Activated B cell treated with CpG ODN at 0.5 μM for 24 hours (primary cell): ENCODE measurements at regions of chr1 and their contacts with region 1.

Region 1: GRCh38 chr1:213015099-213016050 is at the start of gene ANGEL2:
- DNase-seq: peak; percentile 87
- ATAC-seq: peak; percentile 95
- H3K4me3 Mint-ChIP-seq: peak within 1 kb of the TSS; percentile 100
- H3K27ac Mint-ChIP-seq: peak within 1 kb of the TSS; percentile 99
- H3K4me1 Mint-ChIP-seq: peaks cover 20% of the 10 kb centered on the region
- H3K27me3 Mint-ChIP-seq: no peaks in the 10 kb centered on the region
- CTCF ChIP-seq: no peak
- total RNA-seq, gene ANGEL2: 54.1 and 63.3 TPM in 2 replicates

Region 2: GRCh38 chr1:212638492-212639151 is 376.8 kb before region 1 on chr1:
- CTCF ChIA-PET with region 1: no interaction called
- POLR2A ChIA-PET with region 1: interaction called, 11 read pairs
- intact Hi-C with region 1: no loop called
- DNase-seq: no peak
- ATAC-seq: no peak
- H3K4me3 Mint-ChIP-seq: no peak overlapping the region
- H3K27ac Mint-ChIP-seq: no peak overlapping the region
- H3K4me1 Mint-ChIP-seq: peaks cover 27% of the 10 kb centered on the region
- H3K27me3 Mint-ChIP-seq: peaks cover 9% of the 10 kb centered on the region
- CTCF ChIP-seq: no peak

Region 3: GRCh38 chr1:212950243-212951125 is 64.9 kb before region 1 on chr1 and contains the start of gene VASH2:
- CTCF ChIA-PET with region 1: no interaction called
- POLR2A ChIA-PET with region 1: no interaction called
- intact Hi-C with region 1: loop called (anchors 2 kb)
- DNase-seq: peak; percentile 53
- ATAC-seq: peak; percentile 99
- H3K4me3 Mint-ChIP-seq: peak within 1 kb of the TSS; percentile 88
- H3K27ac Mint-ChIP-seq: no peak within 1 kb of the TSS
- H3K4me1 Mint-ChIP-seq: peaks cover 27% of the 10 kb centered on the region
- H3K27me3 Mint-ChIP-seq: peaks cover 21% of the 10 kb centered on the region
- CTCF ChIP-seq: no peak
- total RNA-seq, gene VASH2: 0.07 and 0.17 TPM in 2 replicates

Region 4: GRCh38 chr1:212962509-212962908 is 52.9 kb before region 1 on chr1:
- CTCF ChIA-PET with region 1: no interaction called
- POLR2A ChIA-PET with region 1: no interaction called
- intact Hi-C with region 1: no loop called
- DNase-seq: no peak
- ATAC-seq: no peak
- H3K4me3 Mint-ChIP-seq: no peak overlapping the region
- H3K27ac Mint-ChIP-seq: no peak overlapping the region
- H3K4me1 Mint-ChIP-seq: peaks cover 3% of the 10 kb centered on the region
- H3K27me3 Mint-ChIP-seq: peaks cover 2% of the 10 kb centered on the region
- CTCF ChIP-seq: no peak

Region 5: DNA sequence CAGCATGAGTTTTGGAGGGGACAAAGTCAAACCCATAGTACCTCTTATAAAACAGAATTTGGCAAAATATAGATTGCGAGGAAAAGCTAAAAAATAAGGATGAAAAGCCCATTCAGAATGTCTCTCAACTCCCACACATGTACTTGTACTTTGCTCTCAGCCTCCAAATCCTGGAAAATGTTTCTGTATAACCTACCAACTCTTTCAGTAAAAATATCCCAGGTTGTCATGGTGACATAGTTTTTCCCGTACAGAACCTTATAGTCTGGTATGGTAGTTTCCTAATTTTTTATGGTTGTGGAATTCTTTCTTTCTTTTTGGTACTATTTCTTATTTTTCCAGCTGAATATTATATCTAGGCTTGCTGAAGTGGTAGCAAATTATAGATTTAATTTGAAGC is 20.2 kb after region 1 on chr1:
- CTCF ChIA-PET with region 1: no interaction called
- POLR2A ChIA-PET with region 1: no interaction called
- intact Hi-C with region 1: no loop called
- DNase-seq: no peak
- ATAC-seq: no peak
- H3K4me3 Mint-ChIP-seq: no peak overlapping the region
- H3K27ac Mint-ChIP-seq: no peak overlapping the region
- H3K4me1 Mint-ChIP-seq: no peaks in the 10 kb centered on the region
- H3K27me3 Mint-ChIP-seq: peaks cover 28% of the 10 kb centered on the region
- CTCF ChIP-seq: no peak

Region 6: DNA sequence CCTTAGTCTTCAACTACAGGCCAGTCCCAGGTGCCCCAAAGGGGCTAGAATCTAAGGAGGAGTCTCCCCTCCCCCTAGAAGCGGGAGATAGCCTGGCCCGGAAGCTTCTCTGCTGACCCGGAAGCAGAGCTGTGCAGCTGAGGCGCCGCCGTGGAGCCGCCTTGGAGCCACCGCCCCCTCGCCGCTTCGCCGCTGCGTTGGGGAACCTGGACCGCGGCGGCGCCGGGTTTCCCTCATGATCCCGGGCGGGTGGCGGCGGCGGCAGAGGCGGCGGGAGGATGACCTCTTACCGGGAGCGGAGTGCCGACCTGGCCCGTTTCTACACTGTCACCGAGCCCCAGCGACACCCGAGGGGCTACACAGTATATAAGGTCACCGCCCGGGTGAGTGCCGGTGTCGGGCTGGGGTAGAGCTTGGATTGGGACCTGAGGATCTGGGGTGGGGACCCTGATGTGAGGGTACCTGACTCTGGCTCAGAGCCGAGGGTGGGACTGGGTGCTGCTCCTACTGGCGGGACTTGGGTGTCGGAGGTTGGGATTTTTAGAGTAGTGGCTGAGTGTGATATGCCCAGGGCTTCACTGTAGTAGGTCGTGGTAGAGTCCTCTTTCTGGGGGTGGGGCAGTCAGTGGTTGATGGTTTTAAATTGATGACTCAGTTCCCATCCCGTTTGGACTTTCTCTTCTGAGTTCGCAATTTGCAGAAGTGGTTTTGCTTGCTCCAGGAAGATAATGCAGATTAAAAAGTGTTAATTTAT is 35.9 kb after region 1 on chr1 and contains the start of gene RPS6KC1:
- CTCF ChIA-PET with region 1: no interaction called
- POLR2A ChIA-PET with region 1: interaction called, 5 read pairs
- intact Hi-C with region 1: loop called (anchors 1 kb)
- DNase-seq: peak; percentile 73
- ATAC-seq: peak; percentile 93
- H3K4me3 Mint-ChIP-seq: peak within 1 kb of the TSS; percentile 97
- H3K27ac Mint-ChIP-seq: peak within 1 kb of the TSS; percentile 92
- H3K4me1 Mint-ChIP-seq: peaks cover 25% of the 10 kb centered on the region
- H3K27me3 Mint-ChIP-seq: peaks cover 20% of the 10 kb centered on the region
- CTCF ChIP-seq: no peak
- total RNA-seq, gene RPS6KC1: 12.9 and 13.0 TPM in 2 replicates

Region 7: GRCh38 chr1:214602764-214603657 is 1587.6 kb after region 1 on chr1 and contains the start of gene CENPF:
- CTCF ChIA-PET with region 1: no interaction called
- POLR2A ChIA-PET with region 1: no interaction called
- intact Hi-C with region 1: loop called (anchors 2 kb)
- DNase-seq: peak; percentile 82
- ATAC-seq: peak; percentile 97
- H3K4me3 Mint-ChIP-seq: peak within 1 kb of the TSS; percentile 96
- H3K27ac Mint-ChIP-seq: peak within 1 kb of the TSS; percentile 62
- H3K4me1 Mint-ChIP-seq: peaks cover 21% of the 10 kb centered on the region
- H3K27me3 Mint-ChIP-seq: no peaks in the 10 kb centered on the region
- CTCF ChIP-seq: no peak
- total RNA-seq, gene CENPF: 4.0 and 4.1 TPM in 2 replicates